ENCODE measurements at regions of chr12 and their contacts with region 1.

Region 1: DNA sequence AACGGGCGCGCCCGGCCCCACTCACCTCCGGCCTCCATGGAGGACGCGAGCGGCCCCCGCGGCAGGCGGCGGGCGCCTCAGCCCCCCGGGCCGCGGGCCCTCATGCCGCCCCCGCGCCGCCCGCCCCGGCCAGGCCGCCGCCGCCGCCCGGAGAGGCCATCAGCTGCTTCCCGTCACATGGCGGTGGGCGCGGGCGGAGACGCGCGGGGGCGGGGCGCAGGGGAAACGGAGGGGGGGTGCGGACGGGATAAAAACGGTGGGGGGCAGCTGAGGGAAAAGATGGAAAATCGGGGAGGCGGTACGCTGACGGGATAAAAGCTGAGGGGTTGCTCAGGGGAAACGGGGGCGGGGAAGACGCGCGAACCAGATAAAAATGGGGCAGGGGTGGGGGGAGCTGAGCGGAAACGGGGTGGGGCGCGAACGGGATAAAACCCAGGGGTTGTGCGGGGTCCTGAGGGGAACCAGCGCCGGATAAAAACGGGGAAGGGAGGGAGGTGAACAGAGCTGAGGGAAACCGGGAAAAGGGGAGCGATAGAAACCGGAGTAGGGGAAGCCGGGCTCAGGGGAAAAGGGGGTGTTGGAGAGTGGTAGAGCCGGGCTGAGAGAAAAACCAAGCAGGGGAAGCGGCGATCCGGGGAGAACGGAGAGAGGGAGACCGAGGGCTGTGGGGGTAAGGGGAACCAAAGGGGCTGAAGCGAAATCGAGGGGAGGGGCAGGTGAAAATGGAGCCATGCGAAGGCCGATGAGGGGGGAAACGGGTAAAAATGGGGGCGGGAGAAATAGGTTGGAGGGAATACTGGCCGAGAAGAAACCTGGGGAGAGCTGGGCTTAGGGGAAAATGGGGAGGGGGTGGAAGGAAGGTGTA is at the start of gene WSB2:
- DNase-seq: peak; percentile 90
- ATAC-seq: peak; percentile 65
- total RNA-seq, gene WSB2: 97.3 TPM

Region 2: GRCh38 chr12:118103604-118104382 is 42.5 kb after region 1 on chr12 and contains the start of gene VSIG10:
- intact Hi-C with region 1: loop called (anchors 2 kb)
- DNase-seq: peak; percentile 84
- ATAC-seq: peak; percentile 98
- total RNA-seq, gene VSIG10: 12.4 TPM

Region 3: GRCh38 chr12:118135788-118136558 is 74.7 kb after region 1 on chr12 and contains the start of gene PEBP1:
- intact Hi-C with region 1: loop called (anchors 5 kb)
- DNase-seq: peak; percentile 98
- ATAC-seq: peak; percentile 99
- total RNA-seq, gene PEBP1: 459 TPM